ENCODE measurements at regions of chr13 and their contacts with region 1.

Region 1: DNA sequence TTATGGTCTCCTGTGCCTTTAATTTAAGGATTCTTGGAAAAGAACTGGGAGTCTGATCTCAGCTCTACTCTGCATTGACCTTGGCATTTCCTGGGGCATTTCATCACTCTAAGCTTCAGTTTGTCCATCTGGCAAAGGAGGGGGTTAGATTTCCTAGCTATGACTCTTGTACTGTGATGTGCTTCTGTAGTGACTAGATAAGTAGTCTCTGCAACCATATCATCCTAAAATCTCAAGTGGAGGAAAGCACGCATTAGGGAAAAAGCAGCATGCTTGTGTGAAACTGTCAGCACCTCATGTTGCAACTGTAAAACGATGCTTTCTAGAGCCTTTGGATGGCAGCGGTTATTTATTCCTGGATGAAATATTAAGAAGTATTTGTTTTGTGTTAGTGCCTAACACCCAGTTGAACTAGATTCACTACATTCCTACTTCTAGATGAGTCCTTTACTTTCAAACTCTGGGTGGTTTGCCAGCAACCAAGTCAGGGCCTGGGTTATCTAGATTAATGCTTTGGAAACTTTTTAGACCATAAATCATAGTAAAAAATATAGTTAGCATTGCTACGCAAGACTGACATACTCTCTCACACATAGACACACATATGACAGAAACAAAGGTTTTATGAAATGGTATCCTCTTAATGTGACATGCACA is 6.8 kb downstream of the WDFY2 start:
- DNase-seq: peak in 1 of 2 donors; percentile 55
- H3K4me3 ChIP-seq: no peak overlapping the region
- CTCF ChIP-seq: no peak
- POLR2A ChIP-seq: no peak

Region 2: DNA sequence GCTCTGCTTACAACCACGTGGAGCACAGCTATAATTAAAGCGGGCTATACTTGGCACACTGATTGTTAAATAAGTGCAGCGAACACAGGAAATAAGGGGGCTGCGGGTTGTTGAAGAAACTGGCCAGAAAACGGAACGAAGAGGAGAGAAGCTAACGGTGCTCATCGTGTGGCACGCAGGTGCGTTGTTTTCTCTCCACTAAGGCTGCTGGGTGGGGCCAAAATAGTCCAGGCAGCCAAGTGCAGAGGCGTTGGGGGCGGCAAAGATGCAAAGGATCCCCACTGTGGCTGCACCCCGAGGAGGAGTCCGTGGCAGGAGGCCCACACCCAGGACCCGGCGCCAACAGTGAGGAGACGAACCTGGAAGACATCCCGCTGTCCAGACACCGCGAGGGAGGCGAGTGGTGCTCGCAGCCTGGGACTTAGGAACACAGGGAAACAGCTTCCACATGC is 1970.9 kb before region 1 on chr13:
- intact Hi-C with region 1: no loop called
- DNase-seq: no peak
- H3K4me3 ChIP-seq: no peak overlapping the region
- CTCF ChIP-seq: no peak
- POLR2A ChIP-seq: no peak

Region 3: GRCh38 chr13:51740698-51741097 is 149.6 kb after region 1 on chr13:
- intact Hi-C with region 1: loop called (anchors 10 kb)
- DNase-seq: no peak
- H3K4me3 ChIP-seq: no peak overlapping the region
- CTCF ChIP-seq: no peak
- POLR2A ChIP-seq: no peak

Region 4: GRCh38 chr13:52109116-52109670 is 518.1 kb after region 1 on chr13:
- intact Hi-C with region 1: no loop called
- DNase-seq: no peak
- H3K4me3 ChIP-seq: no peak overlapping the region
- CTCF ChIP-seq: no peak
- POLR2A ChIP-seq: no peak